ENCODE measurements at regions of chr19 and their contacts with region 1.

Region 1: DNA sequence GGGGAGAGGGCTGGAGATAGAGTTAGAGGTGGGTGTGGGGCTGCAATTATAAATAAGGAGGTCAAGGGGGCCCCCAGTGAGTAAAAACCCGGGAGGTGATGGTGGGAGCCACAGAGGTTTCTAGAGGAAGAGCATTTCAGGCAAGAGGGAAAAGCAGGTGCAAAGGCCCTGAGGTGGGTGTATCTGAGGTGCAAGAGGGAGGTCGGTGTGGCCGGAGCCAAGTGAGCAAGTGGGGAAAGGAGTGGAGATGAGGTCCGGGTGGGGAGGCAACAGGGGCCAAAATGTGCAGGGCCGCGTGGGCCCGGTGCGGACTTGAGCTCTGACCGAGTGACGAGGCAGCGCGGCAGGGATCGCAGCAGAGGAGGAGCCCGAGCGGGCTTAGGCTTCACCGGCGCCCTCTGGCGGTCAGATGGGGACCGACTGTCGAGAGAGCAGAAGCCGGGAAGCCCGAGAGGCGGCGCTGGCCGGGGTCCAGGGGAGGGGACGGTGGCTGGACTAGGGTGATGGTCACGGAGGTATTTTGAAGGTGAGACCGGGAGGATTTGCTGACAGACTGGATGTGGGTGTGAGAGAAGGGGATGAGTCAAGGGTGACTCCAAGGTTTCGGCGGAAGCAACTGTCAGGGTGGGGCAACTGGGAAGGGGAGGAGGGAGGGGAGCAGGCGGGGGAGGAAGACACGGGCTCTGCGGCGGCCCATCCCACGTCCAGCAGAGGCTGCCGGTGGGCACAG is 17.7 kb upstream of the SPACA4 start:
- DNase-seq: peak; percentile 84
- ATAC-seq: peak; percentile 93
- H3K4me3 Mint-ChIP-seq: peak overlapping the region; percentile 80
- H3K27ac Mint-ChIP-seq: no peak overlapping the region
- H3K4me1 Mint-ChIP-seq: peaks cover 15% of the 10 kb centered on the region
- H3K27me3 Mint-ChIP-seq: peaks cover 9% of the 10 kb centered on the region
- CTCF ChIP-seq: peak; percentile 58

Region 2: DNA sequence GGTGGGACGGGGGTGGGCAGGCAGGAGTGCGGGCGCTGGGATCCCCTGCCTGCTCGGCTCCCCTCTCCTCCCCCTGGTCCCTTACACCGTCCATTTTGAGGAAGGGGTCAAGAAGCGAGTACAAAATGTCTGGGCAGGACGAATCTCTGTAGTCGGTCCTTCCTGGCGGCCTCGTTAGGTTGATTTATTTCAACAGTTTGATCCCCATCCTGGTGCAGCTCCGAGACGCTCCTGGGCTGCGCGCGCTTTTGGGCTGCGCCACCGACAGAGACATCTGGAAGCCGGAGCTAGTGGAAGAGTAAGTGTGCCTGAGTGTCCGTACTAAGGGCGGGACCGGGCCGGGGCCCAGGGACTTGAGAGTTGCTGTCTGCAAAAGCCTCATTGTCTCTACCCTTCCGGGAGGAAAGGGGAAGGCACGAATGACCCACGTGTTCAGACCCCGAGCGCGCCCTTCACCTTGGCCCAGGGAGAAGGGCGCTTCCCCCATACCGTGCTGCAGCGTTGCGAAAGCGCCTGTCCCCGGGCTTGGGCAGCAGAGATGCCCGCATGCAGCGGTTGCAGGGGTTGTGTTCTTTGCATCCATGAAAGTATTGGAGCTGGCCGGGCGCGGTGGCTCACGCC is 317.2 kb before region 1 on chr19:
- CTCF ChIA-PET with region 1: interaction called, 21 read pairs
- POLR2A ChIA-PET with region 1: no interaction called
- intact Hi-C with region 1: loop called (anchors 1 kb)
- DNase-seq: peak; percentile 37
- ATAC-seq: peak; percentile 75
- H3K4me3 Mint-ChIP-seq: peak overlapping the region; percentile 95
- H3K27ac Mint-ChIP-seq: peak overlapping the region; percentile 80
- H3K4me1 Mint-ChIP-seq: peaks cover 14% of the 10 kb centered on the region
- H3K27me3 Mint-ChIP-seq: no peaks in the 10 kb centered on the region
- CTCF ChIP-seq: no peak

Region 3: GRCh38 chr19:48351341-48351752 is 237.5 kb before region 1 on chr19:
- CTCF ChIA-PET with region 1: interaction called, 8 read pairs
- POLR2A ChIA-PET with region 1: no interaction called
- intact Hi-C with region 1: loop called (anchors 1 kb)
- DNase-seq: peak; percentile 69
- ATAC-seq: peak; percentile 81
- H3K4me3 Mint-ChIP-seq: no peak overlapping the region
- H3K27ac Mint-ChIP-seq: no peak overlapping the region
- H3K4me1 Mint-ChIP-seq: peaks cover 2% of the 10 kb centered on the region
- H3K27me3 Mint-ChIP-seq: no peaks in the 10 kb centered on the region
- CTCF ChIP-seq: no peak

Region 4: DNA sequence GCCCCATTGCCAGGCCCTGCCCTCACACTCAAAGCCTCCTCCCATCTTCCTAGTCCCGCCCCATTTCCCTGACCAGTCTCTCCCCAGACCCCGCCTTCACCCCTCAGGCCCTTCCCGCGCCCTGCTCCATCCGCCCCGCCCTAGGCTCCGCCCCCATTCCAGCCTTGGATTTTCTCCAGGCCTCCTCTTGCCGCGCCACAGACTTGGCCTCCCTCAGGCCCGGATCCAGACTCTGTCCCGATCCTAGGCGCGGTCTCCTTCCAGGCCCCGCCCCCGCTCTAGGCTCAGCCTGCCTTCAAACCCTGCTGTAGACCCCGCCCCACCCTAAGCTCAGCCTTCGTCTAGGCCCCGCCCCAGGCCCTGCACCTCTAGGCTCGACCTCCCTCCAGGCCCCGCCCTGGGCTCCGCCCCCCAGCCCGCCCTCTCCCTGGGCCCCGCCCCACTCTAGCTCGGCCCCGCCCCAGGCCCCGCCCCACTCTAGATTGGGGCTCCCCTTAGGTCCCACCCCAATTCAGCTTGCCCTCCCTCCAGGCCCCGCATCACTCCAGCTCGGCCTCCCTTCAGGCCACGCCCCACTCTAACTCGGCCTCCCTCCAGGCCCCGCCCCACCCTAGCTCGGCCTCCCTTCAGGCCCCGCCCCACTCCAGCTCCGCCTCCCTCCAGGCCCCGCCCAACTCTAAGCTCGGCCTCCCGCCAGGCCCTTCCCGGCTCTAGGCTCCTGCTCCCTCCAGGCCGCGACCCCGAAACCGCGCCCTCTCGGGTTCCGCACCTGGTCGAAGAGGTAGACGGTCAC is 95.7 kb before region 1 on chr19:
- CTCF ChIA-PET with region 1: interaction called, 40 read pairs
- POLR2A ChIA-PET with region 1: interaction called, 7 read pairs
- intact Hi-C with region 1: loop called (anchors 1 kb)
- DNase-seq: peak; percentile 71
- ATAC-seq: peak; percentile 69
- H3K4me3 Mint-ChIP-seq: peak overlapping the region; percentile 74
- H3K27ac Mint-ChIP-seq: no peak overlapping the region
- H3K4me1 Mint-ChIP-seq: peaks cover 42% of the 10 kb centered on the region
- H3K27me3 Mint-ChIP-seq: peaks cover 33% of the 10 kb centered on the region
- CTCF ChIP-seq: no peak

Region 5: DNA sequence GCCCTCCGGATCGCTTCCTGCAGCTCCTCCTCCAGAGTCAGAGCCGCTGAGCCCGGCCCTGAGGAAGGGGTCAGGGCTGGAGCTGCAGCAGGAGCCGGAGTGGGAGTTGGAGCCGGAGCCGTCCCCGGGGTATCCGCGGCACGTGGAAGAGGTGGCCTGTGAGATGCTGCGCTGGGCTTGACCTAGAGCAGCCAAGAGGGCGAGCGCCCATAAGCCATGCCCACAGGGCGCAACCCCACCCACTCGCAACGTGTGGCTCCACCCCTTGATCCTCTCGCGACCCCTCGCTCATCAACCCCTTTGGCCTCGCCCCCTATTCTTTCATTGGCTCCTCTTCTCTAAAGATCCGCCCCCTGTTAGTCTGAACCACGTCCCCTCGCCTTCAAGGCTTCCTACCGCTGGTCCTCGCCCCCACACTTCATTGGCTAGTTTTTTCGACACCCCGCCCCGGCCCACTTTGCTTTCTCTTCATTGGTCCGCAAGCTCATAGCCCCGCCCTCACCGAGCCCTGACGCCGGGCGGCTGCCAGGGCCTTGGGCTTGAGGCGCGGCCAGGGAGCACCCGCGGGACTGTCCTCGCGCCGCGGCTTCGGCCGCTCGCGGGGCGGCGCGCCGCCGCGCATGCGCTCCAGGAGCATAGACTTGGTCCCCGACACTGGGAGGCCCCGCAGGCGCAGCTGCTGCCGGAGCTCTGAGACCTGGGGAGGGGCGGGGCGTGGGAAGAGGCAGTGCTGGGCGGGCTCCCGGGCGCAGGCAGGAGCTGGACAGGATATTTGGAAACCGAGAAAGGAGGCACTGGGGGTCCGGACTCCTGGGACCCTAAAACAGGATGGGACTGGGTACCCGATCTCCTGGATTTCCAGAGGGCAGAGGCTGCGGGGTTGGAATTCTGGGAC is 125.3 kb after region 1 on chr19:
- CTCF ChIA-PET with region 1: no interaction called
- POLR2A ChIA-PET with region 1: no interaction called
- intact Hi-C with region 1: no loop called
- DNase-seq: peak; percentile 94
- ATAC-seq: peak; percentile 91
- H3K4me3 Mint-ChIP-seq: peak overlapping the region; percentile 81
- H3K27ac Mint-ChIP-seq: peak overlapping the region; percentile 77
- H3K4me1 Mint-ChIP-seq: peaks cover 25% of the 10 kb centered on the region
- H3K27me3 Mint-ChIP-seq: no peaks in the 10 kb centered on the region
- CTCF ChIP-seq: no peak

Region 6: DNA sequence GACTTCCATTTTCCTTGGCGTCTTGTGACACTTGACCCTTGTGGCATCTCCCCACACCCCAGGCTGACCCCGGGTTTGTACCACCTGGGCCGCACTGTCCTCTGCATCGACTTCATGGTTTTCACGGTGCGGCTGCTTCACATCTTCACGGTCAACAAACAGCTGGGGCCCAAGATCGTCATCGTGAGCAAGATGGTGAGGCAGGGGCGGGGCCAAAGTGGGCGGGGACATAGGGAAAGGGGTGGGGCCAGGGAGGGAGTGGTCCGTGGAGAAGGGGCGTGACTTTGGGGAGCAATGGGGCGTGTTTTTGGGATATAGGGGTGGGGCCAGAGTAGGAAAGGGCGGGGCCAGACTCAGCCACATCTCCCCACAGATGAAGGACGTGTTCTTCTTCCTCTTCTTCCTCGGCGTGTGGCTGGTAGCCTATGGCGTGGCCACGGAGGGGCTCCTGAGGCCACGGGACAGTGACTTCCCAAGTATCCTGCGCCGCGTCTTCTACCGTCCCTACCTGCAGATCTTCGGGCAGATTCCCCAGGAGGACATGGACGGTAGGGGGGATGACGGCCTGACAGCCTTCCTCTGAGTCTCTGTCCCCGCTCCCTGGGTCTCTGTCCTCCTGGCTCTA is 611.5 kb after region 1 on chr19:
- CTCF ChIA-PET with region 1: no interaction called
- POLR2A ChIA-PET with region 1: interaction called, 17 read pairs
- intact Hi-C with region 1: no loop called
- DNase-seq: no peak
- ATAC-seq: no peak
- H3K4me3 Mint-ChIP-seq: no peak overlapping the region
- H3K27ac Mint-ChIP-seq: no peak overlapping the region
- H3K4me1 Mint-ChIP-seq: peaks cover 7% of the 10 kb centered on the region
- H3K27me3 Mint-ChIP-seq: peaks cover 2% of the 10 kb centered on the region
- CTCF ChIP-seq: no peak